ENCODE measurements at regions of chr3 and their contacts with region 1.

Region 1: DNA sequence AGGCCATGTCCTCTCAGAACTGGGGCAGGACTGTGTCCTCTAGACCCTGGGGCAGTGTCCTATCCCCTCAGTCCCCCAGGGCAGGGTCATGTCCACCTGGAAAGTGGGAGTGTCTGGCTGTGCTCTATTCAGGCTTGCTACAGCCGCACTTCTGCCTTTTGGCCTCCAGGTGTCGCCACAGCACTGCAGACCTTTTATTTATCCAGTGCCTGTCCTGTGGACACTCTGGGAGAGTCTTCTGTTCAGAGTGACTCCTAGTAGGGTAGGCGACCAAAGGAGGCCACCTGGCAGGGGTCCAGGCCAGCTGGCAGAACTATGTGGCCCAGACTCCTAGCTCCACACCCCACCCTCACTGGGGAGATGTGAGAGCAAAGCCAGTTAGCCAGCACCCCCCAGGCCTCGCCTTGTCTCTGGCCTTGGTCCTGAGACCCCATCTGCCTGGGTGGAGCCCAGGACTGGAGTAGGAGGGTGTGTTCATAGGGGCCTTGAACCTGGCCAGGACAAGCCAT is 3.9 kb downstream of the TMIE start:
- DNase-seq: peak; percentile 82
- ATAC-seq: peak; percentile 86
- H3K4me3 ChIP-seq: no peak overlapping the region
- H3K27ac ChIP-seq: no peak overlapping the region
- H3K4me1 ChIP-seq: peaks cover 13% of the 10 kb centered on the region
- H3K27me3 ChIP-seq: no peaks in the 10 kb centered on the region
- CTCF ChIP-seq: peak; percentile 95

Region 2: DNA sequence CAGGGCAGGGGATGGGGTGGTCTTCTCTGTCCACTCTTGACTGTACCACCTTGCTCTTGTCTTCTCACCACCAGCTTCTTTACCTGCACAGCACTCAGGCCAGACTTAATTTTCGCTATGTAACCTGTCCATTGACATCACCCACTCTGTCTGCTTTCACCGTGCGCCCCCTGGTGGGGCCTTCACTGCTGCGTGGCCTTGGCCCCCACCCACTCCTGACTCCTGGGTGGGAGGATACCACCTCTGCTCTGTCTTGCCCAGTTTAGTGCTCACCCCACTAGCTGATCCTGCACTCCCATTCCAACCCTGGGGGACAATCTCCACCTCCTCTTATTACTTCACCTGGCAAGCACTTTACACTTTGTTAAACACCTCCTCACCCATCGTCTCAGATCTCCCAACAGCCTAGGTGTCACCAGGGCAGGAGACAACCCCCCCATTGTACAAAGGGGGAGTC is 190.2 kb after region 1 on chr3:
- CTCF ChIA-PET with region 1: interaction called, 7 read pairs
- POLR2A ChIA-PET with region 1: no interaction called
- intact Hi-C with region 1: loop called (anchors 1 kb)
- DNase-seq: peak; percentile 77
- ATAC-seq: peak; percentile 72
- H3K4me3 ChIP-seq: no peak overlapping the region
- H3K27ac ChIP-seq: no peak overlapping the region
- H3K4me1 ChIP-seq: peaks cover 4% of the 10 kb centered on the region; the same call in 1 of the 2 replicates
- H3K27me3 ChIP-seq: no peaks in the 10 kb centered on the region
- CTCF ChIP-seq: peak; percentile 97

Region 3: GRCh38 chr3:46909535-46910442 is 204.7 kb after region 1 on chr3:
- CTCF ChIA-PET with region 1: interaction called, 11 read pairs
- POLR2A ChIA-PET with region 1: interaction called, 3 read pairs
- intact Hi-C with region 1: loop called (anchors 1 kb)
- DNase-seq: peak; percentile 87
- ATAC-seq: peak; percentile 83
- H3K4me3 ChIP-seq: no peak overlapping the region
- H3K27ac ChIP-seq: no peak overlapping the region
- H3K4me1 ChIP-seq: peaks cover 5% of the 10 kb centered on the region; the same call in 1 of the 2 replicates
- H3K27me3 ChIP-seq: no peaks in the 10 kb centered on the region
- CTCF ChIP-seq: peak; percentile 92

Measured in PC-3 (cell line).